Heart right ventricle (tissue), 16 donors: ENCODE measurements at regions of chr6 and their contacts with region 1.

Region 1: GRCh38 chr6:71288228-71289001 is at the start of gene OGFRL1:
- DNase-seq: peak; percentile 77 to 86
- ATAC-seq: peak; percentile 89 to 99 (median 95)
- H3K4me3 ChIP-seq: peak within 1 kb of the TSS; percentile 30 to 94 (median 82)
- H3K27ac ChIP-seq: peak within 1 kb of the TSS; percentile 89 to 97 (median 95)
- H3K4me1 ChIP-seq: peaks cover 0 to 67% (median 50%) of the 10 kb centered on the region in 9 donors
- H3K27me3 ChIP-seq: no peaks in the 10 kb centered on the region
- CTCF ChIP-seq: peak in 3 of 9 donors; percentile 26 to 52 (median 39)
- total RNA-seq, gene OGFRL1: 5.3 to 12.9 (median 9.1) TPM

Region 2: GRCh38 chr6:70667711-70668498 is 620.5 kb before region 1 on chr6 and contains the start of gene SMAP1:
- intact Hi-C with region 1: loop called in 1 of 10 experiments (anchors 5 kb)
- DNase-seq: peak; percentile 95 to 97
- ATAC-seq: peak; percentile 98 to 99 (median 99)
- H3K4me3 ChIP-seq: peak within 1 kb of the TSS; percentile 77 to 96 (median 88)
- H3K27ac ChIP-seq: peak within 1 kb of the TSS; percentile 85 to 98 (median 96)
- H3K4me1 ChIP-seq: peaks cover 0 to 59% (median 41%) of the 10 kb centered on the region in 9 donors
- H3K27me3 ChIP-seq: no peaks in the 10 kb centered on the region
- CTCF ChIP-seq: no peak
- total RNA-seq, gene SMAP1: 28.7 to 36.3 (median 31.0) TPM

Region 3: GRCh38 chr6:71082033-71082641 is 206.3 kb before region 1 on chr6:
- intact Hi-C with region 1: loop called in 1 of 10 experiments (anchors 10 kb)
- DNase-seq: no peak
- ATAC-seq: peak in 3 of 8 donors; percentile 6 to 22 (median 7)
- H3K4me3 ChIP-seq: peak overlapping the region in 7 of 10 donors; percentile 9 to 46 (median 35)
- H3K27ac ChIP-seq: peak overlapping the region in 9 of 10 donors; percentile 30 to 72 (median 51)
- H3K4me1 ChIP-seq: peaks cover 0 to 45% (median 21%) of the 10 kb centered on the region in 9 donors
- H3K27me3 ChIP-seq: no peaks in the 10 kb centered on the region
- CTCF ChIP-seq: no peak

Region 4: GRCh38 chr6:71190809-71191208 is 97.6 kb before region 1 on chr6:
- intact Hi-C with region 1: loop called in 3 of 10 experiments (anchors 5 to 10 kb)
- DNase-seq: no peak
- ATAC-seq: no peak
- H3K4me3 ChIP-seq: no peak overlapping the region
- H3K27ac ChIP-seq: no peak overlapping the region
- H3K4me1 ChIP-seq: no peaks in the 10 kb centered on the region
- H3K27me3 ChIP-seq: no peaks in the 10 kb centered on the region
- CTCF ChIP-seq: peak; percentile 6 to 61 (median 43)

Region 5: DNA sequence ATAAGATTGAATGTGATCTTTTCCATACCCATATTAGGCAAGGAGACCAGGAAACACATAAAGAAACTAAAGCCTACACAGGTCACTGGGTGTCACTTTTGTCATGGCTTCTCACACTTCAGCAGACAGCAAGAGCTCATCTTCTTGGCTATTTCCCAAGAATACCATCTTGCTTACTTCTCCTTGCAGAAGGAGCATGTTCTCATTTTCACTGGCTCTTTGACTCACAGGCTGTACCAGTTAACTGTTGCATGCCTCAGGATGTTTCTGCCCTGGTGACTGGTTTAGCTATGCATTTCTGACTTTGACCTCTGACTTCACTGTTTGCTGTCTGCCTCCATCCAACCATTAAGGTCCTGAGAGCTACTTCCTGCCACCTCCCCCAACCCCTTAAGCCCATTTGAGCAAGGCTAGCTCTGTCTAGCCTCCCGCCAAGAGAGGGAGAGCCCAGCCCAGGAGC is 40.1 kb before region 1 on chr6:
- intact Hi-C with region 1: loop called in 5 of 10 experiments (anchors 1 to 5 kb)
- DNase-seq: peak in 1 of 2 donors; percentile 9
- ATAC-seq: peak in 7 of 8 donors; percentile 21 to 68 (median 52)
- H3K4me3 ChIP-seq: no peak overlapping the region
- H3K27ac ChIP-seq: peak overlapping the region in 3 of 10 donors; percentile 6 to 83 (median 79)
- H3K4me1 ChIP-seq: peaks cover 0 to 56% (median 36%) of the 10 kb centered on the region in 9 donors
- H3K27me3 ChIP-seq: no peaks in the 10 kb centered on the region
- CTCF ChIP-seq: no peak

Region 6: GRCh38 chr6:71324194-71324785 is 35.9 kb after region 1 on chr6:
- intact Hi-C with region 1: no loop called
- DNase-seq: peak in 1 of 2 donors; percentile 10
- ATAC-seq: peak in 6 of 8 donors; percentile 35 to 75 (median 45)
- H3K4me3 ChIP-seq: no peak overlapping the region
- H3K27ac ChIP-seq: peak overlapping the region in 4 of 10 donors; percentile 3 to 49 (median 14)
- H3K4me1 ChIP-seq: peaks cover 0 to 8% (median 0%) of the 10 kb centered on the region in 9 donors
- H3K27me3 ChIP-seq: no peaks in the 10 kb centered on the region
- CTCF ChIP-seq: no peak

Region 7: DNA sequence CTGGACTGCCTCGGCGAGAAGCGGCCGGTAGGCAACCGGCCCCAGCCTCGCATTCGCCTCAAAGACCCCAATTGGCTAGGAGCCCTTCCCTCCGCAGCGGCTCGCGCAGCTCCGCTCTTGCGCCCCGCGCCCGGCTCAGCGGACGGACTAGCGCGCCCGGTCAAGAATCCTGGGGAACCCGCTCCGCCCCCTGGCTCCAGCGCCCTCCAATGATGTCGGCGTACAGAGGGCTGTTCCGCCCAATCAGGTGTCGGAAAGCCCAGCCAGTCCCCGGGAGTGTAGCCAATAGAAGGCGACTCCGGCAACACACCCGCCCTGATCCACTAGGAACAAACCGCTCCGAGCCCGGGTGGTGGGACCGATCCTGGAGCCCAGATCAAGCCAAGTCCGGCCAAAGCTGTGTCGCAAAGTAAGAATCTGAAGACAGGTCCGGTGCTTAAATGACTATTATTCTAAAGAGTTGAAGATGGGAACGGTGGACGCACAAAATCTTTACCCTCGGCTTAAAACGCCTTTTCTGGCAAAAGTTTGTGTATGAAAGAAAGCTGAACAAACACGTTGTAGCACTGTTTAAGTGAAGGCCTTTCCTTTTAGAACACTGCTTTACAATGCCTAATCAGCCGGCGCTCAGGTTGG is 132.4 kb after region 1 on chr6:
- intact Hi-C with region 1: loop called in 2 of 10 experiments (anchors 10 kb)
- DNase-seq: peak; percentile 95 to 98
- ATAC-seq: peak; percentile 98 to 99 (median 99)
- H3K4me3 ChIP-seq: peak overlapping the region; percentile 60 to 93 (median 89)
- H3K27ac ChIP-seq: peak overlapping the region; percentile 90 to 98 (median 96)
- H3K4me1 ChIP-seq: peaks cover 0 to 39% (median 22%) of the 10 kb centered on the region in 9 donors
- H3K27me3 ChIP-seq: peaks cover 0 to 46% (median 0%) of the 10 kb centered on the region in 7 donors
- CTCF ChIP-seq: peak in 2 of 9 donors; percentile 18 to 20